Endothelial cell of umbilical vein (primary cell): ENCODE measurements at regions of chr7 and their contacts with region 1.

Region 1: DNA sequence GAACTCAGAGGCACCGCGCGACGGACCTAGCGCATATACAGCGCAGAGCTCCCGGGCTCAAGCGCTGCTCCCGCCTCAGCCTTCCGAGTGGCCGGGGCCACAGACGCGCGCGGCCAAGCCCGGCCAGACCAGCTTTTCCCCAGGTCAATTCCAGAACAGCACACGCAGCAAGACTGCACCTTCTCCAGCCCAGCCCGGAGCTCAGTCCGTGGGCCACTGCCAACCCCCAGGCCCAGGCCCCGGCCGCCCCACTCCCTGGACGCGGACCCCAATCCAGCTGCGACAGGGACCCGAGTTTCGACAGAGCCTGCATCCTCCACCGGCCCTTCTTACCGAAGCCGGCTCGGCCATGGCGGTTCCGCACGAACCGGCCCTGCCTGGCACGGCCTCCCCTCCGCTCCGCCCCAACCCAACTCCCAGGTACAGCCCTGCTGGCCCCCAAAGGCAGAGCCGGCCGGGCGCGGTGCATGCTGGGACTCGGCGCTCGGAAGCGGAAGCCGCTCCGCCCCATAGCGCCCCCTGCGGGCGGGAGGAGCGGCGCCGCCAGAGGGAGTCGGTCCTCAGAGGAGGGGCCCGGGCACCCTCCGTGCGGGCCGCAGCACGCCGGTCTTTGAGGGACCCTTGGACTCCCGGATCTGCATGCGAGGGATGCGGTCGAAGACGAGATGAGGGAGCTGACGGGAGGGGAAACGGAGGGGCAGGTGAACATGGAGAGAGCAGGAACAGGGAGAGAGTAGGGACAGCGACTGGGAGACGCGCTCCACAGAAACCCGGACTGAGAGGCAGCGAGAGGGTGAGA is at the start of gene ZNF425:
- DNase-seq: peak; percentile 93
- H3K4me3 ChIP-seq: peak within 1 kb of the TSS; percentile 56 to 96 (median 86)
- H3K27ac ChIP-seq: peak within 1 kb of the TSS; percentile 39
- H3K4me1 ChIP-seq: peaks cover 13% of the 10 kb centered on the region
- H3K27me3 ChIP-seq: no peaks in the 10 kb centered on the region
- CTCF ChIP-seq: peak; percentile 94 to 97
- POLR2A ChIP-seq: peak; percentile 81
- total RNA-seq, gene ZNF425: 0.93 and 2.0 TPM in 2 replicates

Region 2: GRCh38 chr7:148540041-148540738 is 585.9 kb before region 1 on chr7:
- CTCF ChIA-PET with region 1: no interaction called
- POLR2A ChIA-PET with region 1: no interaction called
- dilution Hi-C with region 1: no loop called
- intact Hi-C with region 1: no loop called
- DNase-seq: no peak
- H3K4me3 ChIP-seq: no peak overlapping the region
- H3K27ac ChIP-seq: no peak overlapping the region
- H3K4me1 ChIP-seq: no peaks in the 10 kb centered on the region
- H3K27me3 ChIP-seq: no peaks in the 10 kb centered on the region
- CTCF ChIP-seq: no peak
- POLR2A ChIP-seq: no peak

Region 3: GRCh38 chr7:148962823-148963582 is 163.1 kb before region 1 on chr7:
- CTCF ChIA-PET with region 1: no interaction called
- POLR2A ChIA-PET with region 1: no interaction called
- dilution Hi-C with region 1: no loop called
- intact Hi-C with region 1: no loop called
- DNase-seq: peak; percentile 87
- H3K4me3 ChIP-seq: peak overlapping the region; percentile 56 to 92 (median 86)
- H3K27ac ChIP-seq: peak overlapping the region; percentile 50
- H3K4me1 ChIP-seq: peaks cover 12% of the 10 kb centered on the region
- H3K27me3 ChIP-seq: no peaks in the 10 kb centered on the region
- CTCF ChIP-seq: peak; percentile 65 to 75
- POLR2A ChIP-seq: no peak

Region 4: GRCh38 chr7:149028346-149029109 is 97.5 kb before region 1 on chr7 and contains the start of gene PDIA4:
- CTCF ChIA-PET with region 1: no interaction called
- POLR2A ChIA-PET with region 1: no interaction called
- dilution Hi-C with region 1: no loop called
- intact Hi-C with region 1: loop called (anchors 2 kb)
- DNase-seq: peak; percentile 100
- H3K4me3 ChIP-seq: peak within 1 kb of the TSS; percentile 80 to 91 (median 90)
- H3K27ac ChIP-seq: peak within 1 kb of the TSS; percentile 56
- H3K4me1 ChIP-seq: peaks cover 12% of the 10 kb centered on the region
- H3K27me3 ChIP-seq: no peaks in the 10 kb centered on the region
- CTCF ChIP-seq: peak in 1 of 2 donors; percentile 50
- POLR2A ChIP-seq: peak; percentile 73
- total RNA-seq, gene PDIA4: 306 and 308 TPM in 2 replicates

Region 5: GRCh38 chr7:149071641-149072437 is 54.2 kb before region 1 on chr7:
- CTCF ChIA-PET with region 1: interaction called, 13 read pairs
- POLR2A ChIA-PET with region 1: no interaction called
- dilution Hi-C with region 1: no loop called
- intact Hi-C with region 1: no loop called
- DNase-seq: no peak
- H3K4me3 ChIP-seq: no peak overlapping the region
- H3K27ac ChIP-seq: no peak overlapping the region
- H3K4me1 ChIP-seq: no peaks in the 10 kb centered on the region
- H3K27me3 ChIP-seq: no peaks in the 10 kb centered on the region
- CTCF ChIP-seq: peak; percentile 23 to 40
- POLR2A ChIP-seq: no peak

Region 6: DNA sequence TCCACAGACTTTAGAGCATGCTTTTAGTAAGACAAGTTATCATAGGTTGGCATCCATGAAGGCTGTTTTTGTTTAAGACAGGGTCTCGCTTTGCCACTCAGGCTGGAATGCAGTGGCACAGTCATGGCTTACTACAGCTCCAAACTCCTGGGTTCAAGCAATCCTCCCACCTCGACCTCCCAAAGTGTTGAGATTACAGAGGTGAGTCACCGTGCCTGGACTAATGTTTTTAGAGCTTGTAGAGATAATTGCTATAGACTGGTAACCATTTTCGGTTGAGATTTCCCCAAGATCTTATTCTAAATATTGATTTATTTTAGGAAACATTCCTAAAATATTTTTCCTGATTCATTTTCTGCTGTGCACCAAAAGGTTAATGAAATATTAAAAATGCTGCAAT is 15.8 kb after region 1 on chr7:
- CTCF ChIA-PET with region 1: interaction called, 61 read pairs
- POLR2A ChIA-PET with region 1: interaction called, 3 read pairs
- dilution Hi-C with region 1: no loop called
- intact Hi-C with region 1: loop called (anchors 1 kb)
- DNase-seq: no peak
- H3K4me3 ChIP-seq: no peak overlapping the region
- H3K27ac ChIP-seq: no peak overlapping the region
- H3K4me1 ChIP-seq: no peaks in the 10 kb centered on the region
- H3K27me3 ChIP-seq: no peaks in the 10 kb centered on the region
- CTCF ChIP-seq: no peak
- POLR2A ChIP-seq: no peak

Region 7: GRCh38 chr7:149147072-149147751 is 21.1 kb after region 1 on chr7 and contains the start of gene ZNF398:
- CTCF ChIA-PET with region 1: interaction called, 61 read pairs
- POLR2A ChIA-PET with region 1: interaction called, 3 read pairs
- dilution Hi-C with region 1: no loop called
- intact Hi-C with region 1: loop called (anchors 1 kb)
- DNase-seq: peak; percentile 75
- H3K4me3 ChIP-seq: peak within 1 kb of the TSS; percentile 74 to 98 (median 87)
- H3K27ac ChIP-seq: peak within 1 kb of the TSS; percentile 57
- H3K4me1 ChIP-seq: peaks cover 4% of the 10 kb centered on the region
- H3K27me3 ChIP-seq: no peaks in the 10 kb centered on the region
- CTCF ChIP-seq: peak; percentile 42 to 79
- POLR2A ChIP-seq: peak; percentile 63
- total RNA-seq, gene ZNF398: 8.6 and 10.6 TPM in 2 replicates

Region 8: DNA sequence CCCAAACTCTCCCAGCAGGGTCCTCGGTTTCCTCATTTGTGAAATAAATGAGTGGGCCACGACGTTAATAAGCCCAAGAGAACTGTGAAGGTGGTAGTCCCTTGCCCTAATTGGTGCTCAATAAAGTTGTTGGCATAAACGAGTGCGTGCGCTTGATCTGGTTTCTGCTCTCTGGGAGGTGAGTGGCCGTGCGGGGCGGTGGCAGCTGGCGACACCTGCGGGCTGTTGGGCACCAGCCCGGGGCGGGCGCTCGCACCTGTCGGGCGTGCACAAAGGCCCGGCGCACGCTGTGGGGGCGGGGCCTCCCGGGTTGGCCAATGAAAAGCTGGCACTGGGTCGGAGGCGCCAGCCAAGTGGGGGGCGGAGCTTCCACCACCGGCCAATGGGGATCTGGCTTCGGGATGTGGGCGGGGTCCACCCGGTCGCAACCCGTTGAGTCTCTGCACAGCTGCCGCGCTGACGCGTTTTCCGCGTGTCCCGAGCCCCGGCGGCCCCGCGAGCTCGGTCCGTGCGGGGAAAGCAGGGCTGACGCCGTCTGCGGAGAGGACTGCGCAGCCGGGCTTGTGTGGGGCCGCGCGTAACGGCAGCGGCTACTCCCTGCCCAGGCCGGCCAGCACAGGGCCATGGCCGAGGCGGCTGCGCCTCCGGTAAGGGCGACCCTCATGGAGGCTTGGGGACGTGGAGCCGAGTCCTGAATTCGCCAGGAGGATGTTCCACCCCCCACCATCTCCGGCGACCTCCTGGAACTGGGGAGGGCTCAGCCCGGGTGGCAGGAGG is 159.0 kb after region 1 on chr7:
- CTCF ChIA-PET with region 1: no interaction called
- POLR2A ChIA-PET with region 1: no interaction called
- dilution Hi-C with region 1: no loop called
- intact Hi-C with region 1: no loop called
- DNase-seq: peak; percentile 95
- H3K4me3 ChIP-seq: peak overlapping the region; percentile 43 to 76 (median 73)
- H3K27ac ChIP-seq: no peak overlapping the region
- H3K4me1 ChIP-seq: peaks cover 9% of the 10 kb centered on the region
- H3K27me3 ChIP-seq: no peaks in the 10 kb centered on the region
- CTCF ChIP-seq: no peak
- POLR2A ChIP-seq: peak; percentile 80

Region 9: GRCh38 chr7:149460493-149461277 is 334.6 kb after region 1 on chr7 and contains the start of gene ZNF777:
- CTCF ChIA-PET with region 1: interaction called, 3 read pairs
- POLR2A ChIA-PET with region 1: no interaction called
- dilution Hi-C with region 1: no loop called
- intact Hi-C with region 1: loop called (anchors 5 kb)
- DNase-seq: peak; percentile 80
- H3K4me3 ChIP-seq: peak within 1 kb of the TSS; percentile 26 to 82 (median 60)
- H3K27ac ChIP-seq: peak within 1 kb of the TSS; percentile 8
- H3K4me1 ChIP-seq: peaks cover 9% of the 10 kb centered on the region
- H3K27me3 ChIP-seq: no peaks in the 10 kb centered on the region
- CTCF ChIP-seq: peak; percentile 40 to 50
- POLR2A ChIP-seq: peak; percentile 77
- total RNA-seq, gene ZNF777: 11.1 and 12.2 TPM in 2 replicates

Region 10: DNA sequence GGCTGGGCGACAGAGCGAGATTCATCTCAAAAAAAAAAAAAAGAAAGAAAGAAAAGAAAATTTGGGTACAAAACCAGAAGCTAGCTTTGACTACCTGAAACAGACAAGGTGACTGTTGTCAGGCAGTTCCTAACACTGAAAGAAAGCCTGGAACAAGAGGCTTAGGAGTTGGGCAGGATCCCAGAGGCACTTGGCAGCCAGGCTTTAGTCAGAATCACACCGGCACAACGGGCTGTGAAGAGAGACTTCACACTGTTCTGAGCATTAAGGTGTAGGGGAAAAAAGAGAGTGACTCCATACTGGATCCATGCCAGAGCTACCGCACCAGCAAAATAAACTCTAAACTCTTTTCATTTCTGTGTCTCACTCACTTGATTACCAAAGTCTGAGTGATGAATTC is 516.5 kb after region 1 on chr7:
- CTCF ChIA-PET with region 1: no interaction called
- POLR2A ChIA-PET with region 1: no interaction called
- dilution Hi-C with region 1: no loop called
- intact Hi-C with region 1: no loop called
- DNase-seq: no peak
- H3K4me3 ChIP-seq: no peak overlapping the region
- H3K27ac ChIP-seq: no peak overlapping the region
- H3K4me1 ChIP-seq: no peaks in the 10 kb centered on the region
- H3K27me3 ChIP-seq: no peaks in the 10 kb centered on the region
- CTCF ChIP-seq: no peak
- POLR2A ChIP-seq: no peak